WTC11 (cell line): ENCODE measurements at regions of chr7 and their contacts with region 1.

Region 1: GRCh38 chr7:73738612-73739374 is at the start of gene ABHD11:
- DNase-seq: peak; percentile 98
- ATAC-seq: peak; percentile 61
- H3K4me3 Mint-ChIP-seq: peak within 1 kb of the TSS; percentile 93
- H3K27ac Mint-ChIP-seq: peak within 1 kb of the TSS; percentile 98
- H3K4me1 Mint-ChIP-seq: peaks cover 37% of the 10 kb centered on the region
- H3K27me3 Mint-ChIP-seq: peaks cover 27% of the 10 kb centered on the region
- CTCF ChIP-seq: no peak
- total RNA-seq, gene ABHD11: 23.8 to 27.6 TPM (median 26.5 TPM) in 3 replicates

Region 2: DNA sequence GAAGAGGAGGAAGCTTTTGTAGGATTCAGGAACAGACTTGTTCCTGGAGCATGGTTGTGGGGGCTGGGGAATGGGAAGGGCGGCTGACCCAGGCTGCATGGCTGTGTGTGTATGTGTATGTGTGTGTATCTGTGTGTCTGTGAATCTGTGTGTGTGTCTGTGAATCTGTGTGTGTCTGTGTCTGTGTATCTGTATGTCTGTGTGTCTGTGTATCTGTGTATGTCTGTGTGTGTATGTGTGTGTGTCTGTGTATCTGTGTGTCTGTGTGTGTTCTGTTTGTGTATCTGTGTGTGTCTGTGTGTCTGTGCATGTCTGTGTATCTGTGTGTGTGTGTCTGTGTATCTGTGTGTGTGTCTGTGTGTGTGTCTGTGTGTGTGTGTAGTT is 12.7 kb before region 1 on chr7:
- CTCF ChIA-PET with region 1: interaction called, 20 read pairs
- POLR2A ChIA-PET with region 1: interaction called, 4 read pairs
- DNase-seq: no peak
- ATAC-seq: peak; percentile 8; the same call in 1 of the 2 replicates
- H3K4me3 Mint-ChIP-seq: no peak overlapping the region
- H3K27ac Mint-ChIP-seq: no peak overlapping the region
- H3K4me1 Mint-ChIP-seq: peaks cover 13% of the 10 kb centered on the region
- H3K27me3 Mint-ChIP-seq: peaks cover 15% of the 10 kb centered on the region
- CTCF ChIP-seq: no peak; the same call in 1 of the 2 replicates

Region 3: GRCh38 chr7:73811760-73812168 is 73.0 kb after region 1 on chr7:
- CTCF ChIA-PET with region 1: interaction called, 12 read pairs
- POLR2A ChIA-PET with region 1: interaction called, 6 read pairs
- DNase-seq: peak; percentile 91
- ATAC-seq: peak; percentile 96
- H3K4me3 Mint-ChIP-seq: no peak overlapping the region; the same call in 1 of the 2 replicates
- H3K27ac Mint-ChIP-seq: no peak overlapping the region
- H3K4me1 Mint-ChIP-seq: peaks cover 8% of the 10 kb centered on the region
- H3K27me3 Mint-ChIP-seq: no peaks in the 10 kb centered on the region
- CTCF ChIP-seq: peak; percentile 65

Region 4: GRCh38 chr7:73842247-73842895 is 103.6 kb after region 1 on chr7 and contains the start of gene METTL27:
- CTCF ChIA-PET with region 1: interaction called, 14 read pairs
- POLR2A ChIA-PET with region 1: interaction called, 11 read pairs
- DNase-seq: peak; percentile 96
- ATAC-seq: peak; percentile 93
- H3K4me3 Mint-ChIP-seq: peak within 1 kb of the TSS; percentile 80
- H3K27ac Mint-ChIP-seq: peak within 1 kb of the TSS; percentile 87
- H3K4me1 Mint-ChIP-seq: peaks cover 32% of the 10 kb centered on the region
- H3K27me3 Mint-ChIP-seq: no peaks in the 10 kb centered on the region; the same call in 1 of the 2 replicates
- CTCF ChIP-seq: no peak
- total RNA-seq, gene METTL27: 4.3 to 7.7 TPM (median 6.6 TPM) in 3 replicates